Transverse colon (tissue), 4 donors: ENCODE measurements at regions of chr16 and their contacts with region 1.

Region 1: GRCh38 chr16:74296432-74297144 is at the start of gene PSMD7:
- DNase-seq: peak; percentile 93
- H3K4me3 ChIP-seq: peak within 1 kb of the TSS; percentile 61 to 86 (median 64)
- H3K27ac ChIP-seq: peak within 1 kb of the TSS; percentile 87 to 95 (median 92)
- H3K4me1 ChIP-seq: peaks cover 16 to 32% (median 30%) of the 10 kb centered on the region in 4 donors
- H3K27me3 ChIP-seq: no peaks in the 10 kb centered on the region
- CTCF ChIP-seq: no peak
- EP300 ChIP-seq: no peak
- POLR2A ChIP-seq: peak; percentile 87
- total RNA-seq, gene PSMD7: 32.2 to 145 (median 53.6) TPM

Region 2: GRCh38 chr16:72989579-72990551 is 1306.7 kb before region 1 on chr16:
- in situ Hi-C with region 1: no loop called
- intact Hi-C with region 1: loop called (anchors 5 kb)
- DNase-seq: peak; percentile 68
- H3K4me3 ChIP-seq: peak overlapping the region in 1 of 4 donors; percentile 13
- H3K27ac ChIP-seq: peak overlapping the region; percentile 67 to 85 (median 80)
- H3K4me1 ChIP-seq: peaks cover 12 to 48% (median 38%) of the 10 kb centered on the region in 4 donors
- H3K27me3 ChIP-seq: no peaks in the 10 kb centered on the region
- CTCF ChIP-seq: no peak
- EP300 ChIP-seq: peak; percentile 55
- POLR2A ChIP-seq: no peak

Region 3: DNA sequence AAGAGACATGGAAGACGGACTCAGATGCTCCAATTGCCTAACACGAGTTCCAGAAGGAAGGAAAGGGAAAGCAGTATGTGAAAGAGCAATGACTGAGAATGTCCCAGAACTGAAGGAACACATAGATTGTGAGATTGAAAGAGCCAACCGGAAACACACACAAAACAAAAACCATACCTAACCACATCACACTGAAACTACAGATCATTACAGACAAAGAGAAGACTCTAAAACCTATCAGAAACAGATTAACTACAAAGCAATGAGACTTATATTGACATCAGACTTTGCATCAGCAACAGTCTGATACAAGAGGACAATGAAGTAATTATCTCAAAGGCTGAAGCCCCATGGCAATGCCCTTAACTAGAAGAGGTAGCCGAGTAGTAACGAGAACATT is 170.3 kb after region 1 on chr16:
- in situ Hi-C with region 1: no loop called
- intact Hi-C with region 1: no loop called
- DNase-seq: no peak
- H3K4me3 ChIP-seq: no peak overlapping the region
- H3K27ac ChIP-seq: no peak overlapping the region
- H3K4me1 ChIP-seq: no peaks in the 10 kb centered on the region
- H3K27me3 ChIP-seq: no peaks in the 10 kb centered on the region
- CTCF ChIP-seq: no peak
- EP300 ChIP-seq: no peak
- POLR2A ChIP-seq: no peak

Region 4: GRCh38 chr16:74691093-74691855 is 394.7 kb after region 1 on chr16:
- in situ Hi-C with region 1: no loop called
- intact Hi-C with region 1: no loop called
- DNase-seq: no peak
- H3K4me3 ChIP-seq: no peak overlapping the region
- H3K27ac ChIP-seq: no peak overlapping the region
- H3K4me1 ChIP-seq: peaks cover 0 to 2% (median under 1%) of the 10 kb centered on the region in 4 donors
- H3K27me3 ChIP-seq: no peaks in the 10 kb centered on the region
- CTCF ChIP-seq: no peak
- EP300 ChIP-seq: no peak
- POLR2A ChIP-seq: no peak